ENCODE measurements at regions of chr9 and their contacts with region 1.

Region 1: DNA sequence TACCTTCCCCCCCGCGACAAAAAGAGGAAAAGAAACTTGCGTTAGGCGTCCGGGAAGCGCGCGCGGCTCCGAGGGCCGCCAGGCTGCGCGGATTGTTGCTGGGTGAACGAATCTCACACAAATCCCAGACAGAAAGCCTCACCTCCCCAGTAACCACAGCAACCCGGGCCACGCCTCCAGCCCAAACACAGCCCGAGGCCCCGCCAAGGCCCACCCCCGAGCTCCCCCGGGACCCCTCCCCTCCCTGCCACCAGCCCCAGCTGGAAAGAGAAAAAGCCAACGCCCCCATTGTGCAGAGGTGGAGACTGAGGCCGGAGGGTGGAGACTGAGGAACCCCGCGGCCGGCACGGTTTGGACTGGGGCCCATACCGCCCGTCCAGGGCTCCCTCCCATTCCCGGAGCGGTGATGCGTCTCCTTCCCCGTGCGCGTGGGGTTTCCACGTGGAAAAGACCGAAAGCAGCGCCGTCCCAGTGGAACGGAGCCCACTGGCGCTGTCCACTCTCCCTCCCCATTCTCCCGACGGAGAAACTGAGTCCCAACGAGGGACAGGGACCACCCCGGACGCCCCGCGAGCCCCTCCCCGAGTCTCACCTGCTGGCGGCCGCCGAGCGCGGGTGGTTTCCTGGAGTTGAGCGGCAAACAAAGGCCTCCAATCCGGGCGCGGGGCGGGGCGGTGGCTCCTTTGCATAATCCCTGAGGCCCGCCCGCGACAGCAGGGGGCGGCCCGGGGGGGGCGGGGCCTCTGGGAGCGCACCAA is 10.2 kb upstream of the AKNA start:
- DNase-seq: peak; percentile 91 to 96 (median 94)
- ATAC-seq: peak; percentile 94
- H3K4me3 ChIP-seq: peak overlapping the region; percentile 98
- H3K4me3 Mint-ChIP-seq: peak overlapping the region; percentile 86 to 99 (median 96)
- H3K27ac ChIP-seq: peak overlapping the region; percentile 97
- H3K27ac Mint-ChIP-seq: peak overlapping the region; percentile 88 to 99 (median 97)
- H3K4me1 ChIP-seq: peaks cover 26 to 44% of the 10 kb centered on the region in 2 donors
- H3K4me1 Mint-ChIP-seq: peaks cover 40 to 48% (median 46%) of the 10 kb centered on the region in 7 donors
- H3K27me3 ChIP-seq: no peaks in the 10 kb centered on the region
- H3K27me3 Mint-ChIP-seq: no peaks in the 10 kb centered on the region

Region 2: DNA sequence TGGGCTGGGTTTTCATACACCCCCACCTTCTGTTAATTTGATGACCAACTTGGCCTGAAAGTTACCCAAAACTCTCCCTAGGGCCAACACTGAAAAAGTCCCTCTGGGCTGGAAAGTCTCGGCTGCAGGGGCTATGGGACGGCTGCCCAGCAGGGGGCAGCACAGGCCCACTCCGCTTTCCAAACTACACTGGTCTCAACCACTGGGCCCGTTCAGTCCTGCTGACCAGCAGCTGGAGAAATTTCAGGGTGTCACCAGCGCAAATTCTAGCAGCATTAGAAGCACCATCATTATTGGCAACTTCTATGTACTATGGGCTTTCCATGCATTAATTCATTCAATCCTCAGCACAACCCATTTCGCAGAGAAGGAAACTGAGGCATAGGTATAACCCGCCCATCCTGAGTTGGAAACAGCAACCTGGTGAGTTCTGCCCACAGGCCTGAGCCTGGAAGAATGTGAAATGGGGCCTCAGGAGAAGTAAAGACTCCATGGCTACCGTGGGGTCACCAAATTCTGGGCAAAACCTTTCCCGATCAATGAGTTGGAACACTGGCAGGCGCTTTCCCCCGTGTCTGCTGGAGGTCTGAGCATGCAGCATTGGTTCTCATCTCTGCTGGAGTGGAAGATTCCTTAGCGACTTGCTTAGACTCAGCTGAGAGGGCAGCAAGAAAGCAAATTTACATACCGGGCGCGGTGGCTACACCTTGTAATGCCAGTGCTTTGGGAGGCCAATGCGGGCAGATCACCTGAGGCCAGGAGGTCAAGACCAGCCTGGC is 58.7 kb before region 1 on chr9:
- CTCF ChIA-PET with region 1: interaction called, 10 read pairs
- POLR2A ChIA-PET with region 1: interaction called, 978 read pairs
- intact Hi-C with region 1: loop called in 1 of 2 experiments (anchors 1 kb)
- DNase-seq: peak in 8 of 9 donors; percentile 19 to 64 (median 50)
- ATAC-seq: peak; percentile 83
- H3K4me3 ChIP-seq: no peak overlapping the region
- H3K4me3 Mint-ChIP-seq: no peak overlapping the region
- H3K27ac ChIP-seq: peak overlapping the region; percentile 14
- H3K27ac Mint-ChIP-seq: peak overlapping the region in 6 of 9 donors; percentile 15 to 76 (median 67)
- H3K4me1 ChIP-seq: no peaks in the 10 kb centered on the region
- H3K4me1 Mint-ChIP-seq: peaks cover 8 to 37% (median 17%) of the 10 kb centered on the region in 7 donors
- H3K27me3 ChIP-seq: no peaks in the 10 kb centered on the region
- H3K27me3 Mint-ChIP-seq: no peaks in the 10 kb centered on the region

Region 3: GRCh38 chr9:114348906-114349482 is 49.0 kb before region 1 on chr9:
- CTCF ChIA-PET with region 1: no interaction called
- POLR2A ChIA-PET with region 1: interaction called, 978 read pairs
- intact Hi-C with region 1: loop called in 1 of 2 experiments (anchors 2 kb)
- DNase-seq: peak in 3 of 9 donors; percentile 18 to 83 (median 62)
- ATAC-seq: peak; percentile 85
- H3K4me3 ChIP-seq: no peak overlapping the region
- H3K4me3 Mint-ChIP-seq: peak overlapping the region in 8 of 10 donors; percentile 29 to 65 (median 50)
- H3K27ac ChIP-seq: peak overlapping the region; percentile 70
- H3K27ac Mint-ChIP-seq: peak overlapping the region; percentile 79 to 98 (median 90)
- H3K4me1 ChIP-seq: peaks cover 22 to 24% of the 10 kb centered on the region in 2 donors
- H3K4me1 Mint-ChIP-seq: peaks cover 23 to 60% (median 43%) of the 10 kb centered on the region in 7 donors
- H3K27me3 ChIP-seq: no peaks in the 10 kb centered on the region
- H3K27me3 Mint-ChIP-seq: no peaks in the 10 kb centered on the region

Region 4: DNA sequence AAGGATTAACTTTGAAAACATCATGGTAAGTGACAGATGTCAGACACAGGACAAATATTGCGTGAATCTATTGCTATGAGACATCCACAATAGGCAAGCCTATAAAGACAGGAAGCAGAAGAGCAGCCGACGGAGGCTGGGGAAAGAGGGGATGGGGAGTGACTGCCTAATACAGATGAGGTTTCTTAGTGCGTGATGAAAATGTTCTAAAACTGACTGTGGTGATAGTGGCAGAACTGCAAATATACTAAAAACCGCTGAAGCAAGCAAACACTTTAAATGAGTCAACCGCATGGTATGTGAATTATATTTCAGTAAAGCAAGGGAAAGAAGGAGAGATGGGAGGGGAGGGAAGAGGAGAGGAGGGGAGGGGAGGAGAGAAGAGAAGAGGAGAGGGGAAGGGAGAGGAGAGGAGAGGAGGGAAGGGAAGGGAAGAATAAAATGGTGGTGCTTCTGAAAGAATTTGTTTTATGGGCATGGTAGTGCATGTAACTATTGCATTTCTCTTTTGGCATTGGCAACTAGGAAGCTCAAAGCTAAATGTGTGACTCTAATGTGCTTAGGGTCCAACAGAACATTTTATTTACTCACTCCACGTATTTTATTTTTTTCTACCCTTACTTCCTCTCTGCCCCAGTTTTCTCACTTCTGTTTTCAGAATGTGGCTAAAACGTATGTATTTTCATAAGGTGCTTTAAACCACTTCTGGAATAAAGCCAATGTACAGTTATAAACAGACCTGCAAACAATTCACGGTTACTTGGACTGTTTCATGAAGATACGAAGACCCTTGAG is 31.5 kb before region 1 on chr9:
- CTCF ChIA-PET with region 1: interaction called, 5 read pairs
- POLR2A ChIA-PET with region 1: interaction called, 978 read pairs
- intact Hi-C with region 1: loop called (anchors 5 kb)
- DNase-seq: peak in 7 of 9 donors; percentile 40 to 69 (median 64)
- ATAC-seq: peak; percentile 60
- H3K4me3 ChIP-seq: peak overlapping the region; percentile 17
- H3K4me3 Mint-ChIP-seq: peak overlapping the region; percentile 62 to 98 (median 76)
- H3K27ac ChIP-seq: peak overlapping the region; percentile 69
- H3K27ac Mint-ChIP-seq: peak overlapping the region; percentile 70 to 98 (median 93)
- H3K4me1 ChIP-seq: peaks cover 89 to 94% of the 10 kb centered on the region in 2 donors
- H3K4me1 Mint-ChIP-seq: peaks cover 65 to 99% (median 80%) of the 10 kb centered on the region in 7 donors
- H3K27me3 ChIP-seq: no peaks in the 10 kb centered on the region
- H3K27me3 Mint-ChIP-seq: no peaks in the 10 kb centered on the region

Region 5: DNA sequence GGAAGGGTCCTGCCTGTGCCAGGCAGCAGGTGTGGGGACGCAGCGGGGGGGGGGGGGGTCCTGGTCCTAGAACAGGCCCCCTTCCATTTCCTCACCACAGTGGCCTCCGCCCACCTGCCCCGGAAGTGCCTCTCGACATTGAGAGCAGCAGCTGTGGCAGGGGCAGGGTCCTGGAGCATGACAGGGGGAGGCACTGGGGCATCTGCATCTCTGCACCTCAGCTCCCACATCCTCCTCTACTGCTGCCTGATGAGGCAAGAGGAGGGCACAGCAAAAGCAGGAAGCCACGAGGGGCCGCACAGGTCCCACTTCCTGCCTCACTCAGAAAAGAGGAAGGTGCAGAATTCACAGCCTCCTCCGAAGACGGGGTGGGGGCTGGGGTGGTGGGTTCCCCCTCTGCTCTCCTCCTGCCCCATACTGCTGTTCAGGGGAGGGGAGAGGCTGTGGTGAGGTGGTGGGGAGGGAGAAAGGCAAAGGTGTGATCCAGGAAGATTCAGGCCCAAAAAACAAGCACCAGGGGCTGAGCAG is 25.0 kb before region 1 on chr9:
- CTCF ChIA-PET with region 1: interaction called, 8 read pairs
- POLR2A ChIA-PET with region 1: interaction called, 978 read pairs
- intact Hi-C with region 1: loop called (anchors 1 kb)
- DNase-seq: peak; percentile 50 to 93 (median 90)
- ATAC-seq: peak; percentile 91
- H3K4me3 ChIP-seq: peak overlapping the region; percentile 51
- H3K4me3 Mint-ChIP-seq: peak overlapping the region; percentile 79 to 98 (median 86)
- H3K27ac ChIP-seq: peak overlapping the region; percentile 70
- H3K27ac Mint-ChIP-seq: peak overlapping the region; percentile 81 to 100 (median 93)
- H3K4me1 ChIP-seq: peaks cover 92% of the 10 kb centered on the region in 2 donors
- H3K4me1 Mint-ChIP-seq: peaks cover 58 to 97% (median 85%) of the 10 kb centered on the region in 7 donors
- H3K27me3 ChIP-seq: no peaks in the 10 kb centered on the region
- H3K27me3 Mint-ChIP-seq: no peaks in the 10 kb centered on the region

Region 6: GRCh38 chr9:114516913-114517312 is 118.9 kb after region 1 on chr9:
- CTCF ChIA-PET with region 1: no interaction called
- POLR2A ChIA-PET with region 1: no interaction called
- intact Hi-C with region 1: no loop called
- DNase-seq: no peak
- ATAC-seq: no peak
- H3K4me3 ChIP-seq: no peak overlapping the region
- H3K4me3 Mint-ChIP-seq: no peak overlapping the region
- H3K27ac ChIP-seq: no peak overlapping the region
- H3K27ac Mint-ChIP-seq: no peak overlapping the region
- H3K4me1 ChIP-seq: no peaks in the 10 kb centered on the region
- H3K4me1 Mint-ChIP-seq: peaks cover 0 to 19% (median 13%) of the 10 kb centered on the region in 7 donors
- H3K27me3 ChIP-seq: no peaks in the 10 kb centered on the region
- H3K27me3 Mint-ChIP-seq: peaks cover 10 to 33% (median 14%) of the 10 kb centered on the region in 5 donors

Measured in naive thymus-derived CD4-positive, alpha-beta T cell (primary cell).